Aorta (tissue), 5 donors: ENCODE measurements at regions of chr3 and their contacts with region 1.

Region 1: DNA sequence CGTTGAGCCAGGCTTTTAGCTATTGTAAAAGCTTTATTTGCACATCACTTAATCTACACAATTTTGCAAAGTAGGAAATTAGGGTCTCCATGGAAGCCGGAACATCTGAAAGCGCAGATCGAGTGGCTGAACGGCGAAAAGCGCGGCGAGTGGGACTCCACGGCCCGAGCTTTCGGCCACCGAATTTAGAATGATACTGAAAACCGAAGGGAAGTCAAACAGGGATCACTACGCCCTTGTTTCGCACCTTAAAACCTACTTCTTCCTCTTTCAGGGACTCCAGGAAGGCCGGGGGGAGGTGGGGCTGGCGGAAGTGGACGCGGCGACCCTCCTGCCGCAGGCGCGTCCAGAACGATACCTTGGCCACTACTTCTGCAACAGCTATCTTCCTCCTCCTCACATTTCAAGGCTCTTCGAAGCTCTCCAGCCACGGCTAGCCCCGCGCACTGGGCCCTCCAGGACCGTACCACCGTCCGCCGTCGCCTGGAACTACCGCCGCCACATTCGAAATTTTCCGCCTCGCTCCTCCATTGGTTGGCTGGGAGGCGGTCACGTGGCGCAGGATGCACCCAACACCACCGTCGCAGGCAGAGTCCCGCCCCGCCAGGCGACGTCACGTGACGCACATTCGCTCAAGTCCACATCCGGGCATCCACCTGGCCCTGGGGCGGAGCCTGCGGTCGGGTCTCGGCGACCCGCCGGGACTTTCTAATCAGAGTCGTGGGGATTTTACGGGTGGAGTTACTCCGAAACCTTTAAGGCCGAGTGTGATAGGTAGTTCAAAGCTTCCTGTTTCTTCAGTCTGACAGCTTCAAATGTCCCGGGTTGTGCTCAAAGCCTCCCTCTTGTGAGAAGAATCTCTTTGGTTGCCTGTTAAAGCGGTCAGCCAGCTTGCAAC is at the start of gene SGO1:
- DNase-seq: peak; percentile 100
- ATAC-seq: peak; percentile 100
- H3K4me3 ChIP-seq: peak within 1 kb of the TSS; percentile 64 to 90
- H3K27ac ChIP-seq: peak within 1 kb of the TSS; percentile 55 to 91
- H3K4me1 ChIP-seq: peaks cover 0 to 4% of the 10 kb centered on the region in 2 donors
- H3K27me3 ChIP-seq: no peaks in the 10 kb centered on the region
- total RNA-seq, gene SGO1: 0.81 TPM in 1 of 2 donors, not detected in the other

Region 2: GRCh38 chr3:19891740-19892139 is 294.2 kb before region 1 on chr3:
- intact Hi-C with region 1: loop called in 1 of 2 experiments (anchors 5 kb)
- DNase-seq: no peak
- ATAC-seq: no peak
- H3K4me3 ChIP-seq: no peak overlapping the region
- H3K27ac ChIP-seq: no peak overlapping the region
- H3K4me1 ChIP-seq: no peaks in the 10 kb centered on the region
- H3K27me3 ChIP-seq: no peaks in the 10 kb centered on the region